Dorsolateral prefrontal cortex (tissue), 120 donors: ENCODE measurements at regions of chr13 and their contacts with region 1.

Region 1: DNA sequence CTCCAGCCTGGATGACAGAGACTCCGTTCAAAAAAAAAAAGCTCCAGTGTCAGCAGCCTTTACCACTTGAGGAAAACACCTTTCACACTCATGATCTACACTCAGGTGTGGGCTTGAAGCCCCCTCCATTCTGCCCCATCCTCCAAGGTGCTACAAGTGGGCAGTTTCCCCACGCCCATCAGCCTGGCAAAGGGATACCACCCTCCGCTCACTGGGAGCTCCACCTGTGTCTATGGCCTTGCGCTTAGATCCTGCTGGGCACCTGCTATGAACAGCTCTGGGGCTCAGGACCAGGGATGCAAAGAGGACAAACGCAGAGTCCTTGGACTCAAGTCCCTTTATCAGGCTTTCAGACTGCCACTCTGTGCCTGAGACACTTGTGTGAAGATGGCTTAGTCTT is 127.8 kb downstream of the CRYL1 start:
- DNase-seq: no peak
- H3K4me3 ChIP-seq: no peak overlapping the region
- H3K27ac ChIP-seq: no peak overlapping the region
- H3K27me3 ChIP-seq: no peaks in the 10 kb centered on the region
- CTCF ChIP-seq: no peak

Region 2: GRCh38 chr13:19910336-19911072 is 487.4 kb before region 1 on chr13:
- intact Hi-C with region 1: no loop called
- DNase-seq: no peak
- H3K4me3 ChIP-seq: no peak overlapping the region
- H3K27ac ChIP-seq: no peak overlapping the region
- H3K27me3 ChIP-seq: no peaks in the 10 kb centered on the region
- CTCF ChIP-seq: no peak

Region 3: DNA sequence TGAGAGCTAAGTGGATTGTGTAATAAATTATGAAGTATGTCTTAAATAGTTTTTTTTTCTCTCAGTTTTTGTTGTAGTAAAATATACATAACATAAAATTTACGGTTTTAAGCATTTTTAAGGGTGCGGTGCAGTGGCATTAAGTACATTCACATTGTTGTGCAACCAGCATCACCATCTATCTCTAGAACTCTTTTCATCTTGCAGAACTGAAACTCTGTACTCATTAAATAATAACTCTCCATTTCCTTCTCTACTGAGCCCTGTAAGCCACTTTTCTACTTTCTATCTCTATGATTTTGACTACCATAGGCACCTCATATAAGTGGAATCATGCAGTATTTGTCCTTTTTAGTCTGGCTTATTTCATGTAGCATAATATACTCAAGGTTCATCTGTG is 324.1 kb before region 1 on chr13:
- intact Hi-C with region 1: no loop called
- DNase-seq: no peak
- H3K4me3 ChIP-seq: no peak overlapping the region
- H3K27ac ChIP-seq: no peak overlapping the region
- H3K27me3 ChIP-seq: no peaks in the 10 kb centered on the region
- CTCF ChIP-seq: no peak

Region 4: DNA sequence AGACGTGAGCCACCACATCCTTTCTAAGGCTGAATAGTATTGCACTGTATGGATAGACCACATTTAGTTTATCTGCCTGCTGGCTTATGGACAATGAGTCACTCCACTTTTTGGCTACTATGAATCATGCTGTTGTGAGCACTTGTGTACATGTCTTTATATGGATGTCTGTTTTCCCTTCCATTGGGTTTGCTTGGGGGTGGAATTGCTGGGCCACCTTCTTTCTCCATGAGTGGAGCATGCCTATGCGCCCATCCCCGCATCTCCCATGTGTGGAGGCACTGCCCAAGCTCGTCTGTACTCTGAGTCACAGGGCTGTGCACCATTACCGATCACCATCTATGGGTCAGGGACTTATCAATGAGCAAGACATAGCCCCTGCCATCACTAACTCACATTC is 38.6 kb before region 1 on chr13:
- intact Hi-C with region 1: no loop called
- DNase-seq: peak in 2 of 10 donors; percentile 14 to 62
- H3K4me3 ChIP-seq: no peak overlapping the region
- H3K27ac ChIP-seq: no peak overlapping the region
- H3K27me3 ChIP-seq: peaks cover 0 to 6% (median 0%) of the 10 kb centered on the region in 45 donors
- CTCF ChIP-seq: no peak

Region 5: GRCh38 chr13:20378721-20379120 is 19.2 kb before region 1 on chr13:
- intact Hi-C with region 1: loop called in 1 of 2 experiments (anchors 1 kb)
- DNase-seq: no peak
- H3K4me3 ChIP-seq: no peak overlapping the region
- H3K27ac ChIP-seq: no peak overlapping the region
- H3K27me3 ChIP-seq: no peaks in the 10 kb centered on the region
- CTCF ChIP-seq: no peak

Region 6: DNA sequence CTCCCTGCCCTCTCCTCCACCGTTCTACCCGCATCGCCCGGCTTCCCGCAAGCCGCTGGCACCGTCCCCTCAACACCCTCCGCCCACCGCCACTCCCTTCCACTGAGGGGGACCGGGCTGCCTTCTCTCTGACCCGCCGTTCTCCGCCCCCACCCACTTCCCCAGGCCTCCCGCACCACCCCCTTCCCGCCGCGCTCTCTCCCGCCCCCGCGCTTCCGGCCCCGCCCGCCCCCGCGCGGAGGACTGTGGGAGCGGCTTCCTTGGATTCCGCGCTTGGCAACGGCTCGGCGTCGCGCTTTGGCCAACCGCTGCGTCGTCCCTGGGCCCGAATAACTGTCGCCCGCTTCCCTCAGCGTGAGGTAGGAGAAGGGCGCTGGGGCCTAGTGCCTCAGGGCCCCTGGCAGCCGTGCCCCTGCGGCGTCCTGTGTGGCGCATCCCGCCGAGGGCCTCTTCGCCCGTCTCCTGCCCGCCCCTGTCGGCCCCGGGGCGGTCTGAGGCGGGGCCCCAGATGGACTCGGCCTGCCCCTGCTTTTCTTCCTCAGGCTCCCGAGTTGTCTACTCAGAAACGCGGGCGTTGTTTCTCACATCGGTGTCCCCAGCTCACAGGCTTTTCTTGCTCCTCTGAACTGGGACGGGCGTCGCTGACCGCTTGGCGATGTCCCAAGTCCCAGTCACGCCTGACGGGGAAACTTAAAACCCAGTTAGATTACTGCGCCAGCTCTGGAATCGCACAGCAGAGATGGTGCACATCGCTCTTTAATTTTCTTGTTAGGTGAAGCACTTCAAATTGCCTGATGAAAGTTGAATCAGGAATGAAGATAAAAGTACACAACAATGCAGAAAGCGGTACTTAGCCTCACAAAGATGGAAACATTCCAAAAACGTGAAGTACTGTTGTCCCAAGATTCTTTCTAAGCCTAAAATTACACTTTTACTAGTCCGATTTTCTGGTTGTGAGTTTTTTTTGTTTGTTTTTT is 169.3 kb after region 1 on chr13 and contains the start of gene IFT88:
- intact Hi-C with region 1: no loop called
- DNase-seq: peak; percentile 78 to 94 (median 86)
- H3K4me3 ChIP-seq: peak within 1 kb of the TSS; percentile 57 to 94 (median 82)
- H3K27ac ChIP-seq: peak within 1 kb of the TSS; percentile 90 to 99 (median 96)
- H3K27me3 ChIP-seq: no peaks in the 10 kb centered on the region
- CTCF ChIP-seq: peak in 21 of 56 donors; percentile 4 to 38 (median 12)
- total RNA-seq, gene IFT88: 12.3 to 33.2 (median 21.1) TPM